A673 (cell line): ENCODE measurements at regions of chr10 and their contacts with region 1.

Region 1: DNA sequence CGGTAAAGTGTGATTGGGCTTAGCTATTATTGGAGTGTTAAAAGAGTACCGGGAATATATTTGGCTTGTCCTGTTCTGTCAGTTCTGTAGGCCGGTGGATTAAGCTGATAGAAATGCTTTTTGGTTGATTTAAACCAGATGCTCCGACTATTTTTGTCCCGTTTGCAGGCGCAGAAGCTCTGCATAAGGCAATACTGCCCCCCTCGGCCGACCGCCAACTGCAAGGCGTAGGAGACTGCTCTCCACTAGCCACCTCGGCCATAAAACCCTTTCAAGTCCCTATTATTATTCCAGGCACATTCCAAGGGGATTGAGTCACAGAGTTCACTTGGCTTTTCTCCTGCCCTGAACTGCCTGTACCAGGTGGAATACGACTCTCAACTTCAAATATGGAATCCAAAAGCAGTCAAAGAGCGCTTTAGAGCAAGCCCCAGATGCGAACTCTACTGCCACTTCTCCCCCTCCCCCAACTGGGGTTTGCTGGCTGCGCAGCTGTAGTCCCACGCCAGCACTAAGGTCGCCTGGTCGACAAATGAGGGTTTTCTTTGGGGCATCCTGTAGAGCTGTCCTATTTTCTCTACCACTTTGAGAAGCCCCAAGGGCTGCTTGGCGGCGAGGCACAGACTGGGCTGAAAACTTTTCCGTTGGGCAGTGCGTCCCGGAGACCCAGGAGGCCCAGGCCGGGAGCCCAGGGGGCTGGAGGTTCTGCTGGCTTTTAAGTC is 108.3 kb downstream of the REEP3 start:
- DNase-seq: peak; percentile 99
- H3K4me3 ChIP-seq: peak overlapping the region; percentile 61
- H3K27ac ChIP-seq: peak overlapping the region; percentile 96
- H3K4me1 ChIP-seq: peaks cover 43% of the 10 kb centered on the region
- H3K27me3 ChIP-seq: no peaks in the 10 kb centered on the region
- CTCF ChIP-seq: peak; percentile 94

Region 2: GRCh38 chr10:63166742-63167258 is 462.7 kb before region 1 on chr10:
- CTCF ChIA-PET with region 1: interaction called, 14 read pairs
- POLR2A ChIA-PET with region 1: interaction called, 5 read pairs
- intact Hi-C with region 1: loop called (anchors 2 kb)
- DNase-seq: peak; percentile 89
- H3K4me3 ChIP-seq: no peak overlapping the region
- H3K27ac ChIP-seq: no peak overlapping the region
- H3K4me1 ChIP-seq: peaks cover 36% of the 10 kb centered on the region
- H3K27me3 ChIP-seq: no peaks in the 10 kb centered on the region
- CTCF ChIP-seq: peak; percentile 84

Region 3: DNA sequence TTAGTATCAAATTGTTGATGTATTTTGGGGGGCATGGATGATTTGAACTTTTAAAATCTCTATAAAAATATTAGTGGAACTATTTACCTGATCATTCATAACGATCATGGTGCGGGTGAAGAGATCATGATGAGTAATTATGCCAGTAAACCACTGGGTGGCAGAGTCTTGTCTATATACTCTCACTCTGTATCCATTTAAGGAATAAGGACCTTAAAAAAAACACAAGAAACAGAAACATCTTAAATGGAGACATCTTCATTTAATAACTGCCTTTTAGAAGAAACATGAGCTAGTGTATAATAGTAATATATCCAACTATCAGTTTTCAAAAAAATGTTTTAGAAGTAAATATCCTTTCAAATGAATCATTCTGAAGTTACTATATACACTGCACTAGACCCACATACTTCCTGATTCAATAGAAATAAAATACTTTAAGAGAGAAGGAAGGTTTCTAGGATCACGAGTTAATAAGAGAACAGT is 412.4 kb before region 1 on chr10:
- CTCF ChIA-PET with region 1: interaction called, 6 read pairs
- POLR2A ChIA-PET with region 1: no interaction called
- intact Hi-C with region 1: loop called (anchors 1 kb)
- DNase-seq: peak; percentile 71
- H3K4me3 ChIP-seq: no peak overlapping the region
- H3K27ac ChIP-seq: no peak overlapping the region
- H3K4me1 ChIP-seq: peaks cover 42% of the 10 kb centered on the region
- H3K27me3 ChIP-seq: no peaks in the 10 kb centered on the region
- CTCF ChIP-seq: peak; percentile 80

Region 4: DNA sequence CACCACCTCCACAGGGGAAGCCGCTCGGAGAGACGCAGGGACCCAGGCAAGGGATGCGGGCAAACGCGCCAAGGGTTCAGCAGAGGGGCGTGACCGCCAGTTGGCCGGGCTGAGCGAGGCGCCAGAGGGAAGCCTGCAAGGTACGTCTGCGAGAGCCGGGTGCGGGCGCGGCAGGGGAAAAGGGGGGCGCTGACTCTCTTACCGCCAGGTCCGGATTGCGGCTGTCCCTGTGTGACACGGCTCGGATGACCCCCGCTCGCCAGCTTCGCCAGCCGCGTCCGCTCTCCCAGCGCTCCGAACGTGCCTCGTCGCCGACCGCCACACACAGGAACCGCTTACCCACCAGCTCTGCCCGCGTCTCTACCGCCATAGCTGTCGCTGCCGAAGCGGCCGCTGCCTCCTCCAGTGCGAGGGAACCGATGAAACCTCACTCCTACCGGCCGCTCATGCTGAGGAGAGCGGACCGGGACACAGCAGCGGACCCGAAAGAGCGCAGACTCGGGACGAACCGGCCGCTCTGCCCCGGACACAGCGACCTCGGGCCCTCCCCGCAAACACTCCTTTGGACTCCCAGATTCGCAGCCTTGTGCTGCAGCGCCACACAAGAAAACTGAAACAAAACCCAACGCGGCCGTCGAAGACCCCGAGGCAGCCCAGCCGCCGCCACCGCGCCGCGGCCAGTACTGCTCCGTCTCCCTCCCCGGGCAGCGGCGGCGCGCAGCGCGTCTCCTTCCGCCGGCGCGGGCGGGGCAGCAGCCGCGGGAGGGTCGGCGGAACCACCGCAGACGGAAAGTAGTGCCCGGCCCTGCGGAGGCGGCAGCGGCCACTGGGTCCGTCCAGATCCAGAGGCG is 164.0 kb before region 1 on chr10 and contains the start of gene JMJD1C:
- CTCF ChIA-PET with region 1: no interaction called
- POLR2A ChIA-PET with region 1: no interaction called
- intact Hi-C with region 1: loop called (anchors 2 kb)
- DNase-seq: peak; percentile 87
- H3K4me3 ChIP-seq: peak within 1 kb of the TSS; percentile 87
- H3K27ac ChIP-seq: peak within 1 kb of the TSS; percentile 84
- H3K4me1 ChIP-seq: peaks cover 36% of the 10 kb centered on the region
- H3K27me3 ChIP-seq: no peaks in the 10 kb centered on the region
- CTCF ChIP-seq: no peak
- total RNA-seq, gene JMJD1C: 68.2 and 71.4 TPM in 2 replicates

Region 5: DNA sequence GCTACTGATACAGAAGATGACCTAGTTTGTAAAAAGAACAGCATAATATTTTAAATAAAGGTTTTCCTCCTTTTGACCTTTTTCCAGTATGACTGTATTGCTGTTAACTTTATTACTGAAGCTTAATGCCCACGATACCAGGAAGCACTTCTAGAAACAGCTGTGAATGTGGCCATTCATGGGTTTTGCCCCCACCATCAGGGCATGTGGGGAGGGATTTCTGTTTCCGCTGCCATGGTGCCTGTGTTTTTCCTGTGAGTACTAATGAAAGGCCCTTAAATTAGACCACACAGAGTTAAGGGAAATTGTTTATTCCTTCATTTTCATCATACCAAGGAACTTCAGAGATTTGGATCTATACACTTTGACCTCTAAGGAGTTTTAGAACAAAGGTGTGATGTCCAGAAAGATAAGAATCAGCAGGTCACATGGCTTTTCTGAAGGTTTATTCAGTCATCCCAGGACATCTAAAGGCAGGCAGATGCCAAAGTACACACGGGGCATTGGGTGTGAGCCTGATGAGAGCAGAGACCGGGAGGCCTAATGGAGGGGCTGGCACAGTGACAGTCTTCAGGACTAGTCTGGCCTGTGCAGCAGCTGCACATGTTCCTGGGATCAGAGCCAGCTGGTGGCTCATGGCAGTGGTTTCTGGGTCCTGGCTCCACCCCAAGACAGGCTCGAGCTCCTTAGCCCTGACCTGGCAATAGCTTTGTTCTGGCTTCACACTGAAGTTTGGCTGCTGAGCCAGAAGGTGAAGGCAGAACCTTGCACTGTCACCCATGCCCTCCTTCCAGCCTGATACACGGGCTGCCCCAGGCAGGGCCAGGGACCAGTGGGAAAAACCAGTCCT is 82.6 kb after region 1 on chr10:
- CTCF ChIA-PET with region 1: interaction called, 4 read pairs
- POLR2A ChIA-PET with region 1: no interaction called
- intact Hi-C with region 1: loop called (anchors 5 kb)
- DNase-seq: peak; percentile 93
- H3K4me3 ChIP-seq: no peak overlapping the region
- H3K27ac ChIP-seq: peak overlapping the region; percentile 79
- H3K4me1 ChIP-seq: peaks cover 58% of the 10 kb centered on the region
- H3K27me3 ChIP-seq: no peaks in the 10 kb centered on the region
- CTCF ChIP-seq: no peak